SK-N-SH (cell line): ENCODE measurements at regions of chr7 and their contacts with region 1.

Region 1: GRCh38 chr7:145036604-145037405 is 201.0 kb upstream of the TPK1 start:
- DNase-seq: peak; percentile 44
- H3K4me3 ChIP-seq: peak overlapping the region in 1 of 2 experiments; percentile 9; a peak in 1 of 4 replicates
- H3K27ac ChIP-seq: no peak overlapping the region
- H3K4me1 ChIP-seq: no peaks in the 10 kb centered on the region
- H3K27me3 ChIP-seq: no peaks in the 10 kb centered on the region
- CTCF ChIP-seq: peak; percentile 95
- EP300 ChIP-seq: no peak
- RAD21 ChIP-seq: peak; percentile 77

Region 2: DNA sequence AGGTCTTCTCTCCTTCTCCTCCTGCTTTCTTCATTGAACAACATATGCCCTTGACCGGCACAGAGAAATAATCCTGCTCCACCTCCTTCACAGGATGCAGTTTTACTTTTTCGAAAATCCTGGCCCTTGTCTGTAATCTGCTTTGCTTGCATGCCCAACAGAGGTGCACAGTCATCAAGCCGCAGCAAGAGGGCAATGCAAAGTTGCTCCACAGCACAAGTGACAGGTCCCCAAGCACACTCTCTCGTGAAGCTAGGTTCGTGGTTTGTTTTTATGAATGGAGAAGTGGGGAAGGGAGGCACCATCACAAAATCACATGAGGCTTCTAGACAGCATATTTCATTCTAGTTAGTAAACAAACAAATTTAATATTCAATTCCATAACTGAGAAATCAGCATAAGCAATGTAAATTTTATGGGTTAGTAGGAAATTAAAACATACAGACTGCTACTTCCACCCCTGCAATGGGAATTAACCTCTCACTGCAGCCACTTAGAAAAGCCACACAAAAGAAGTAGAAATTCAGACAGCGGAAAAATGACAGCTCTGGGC is 379.8 kb before region 1 on chr7:
- CTCF ChIA-PET with region 1: no interaction called
- POLR2A ChIA-PET with region 1: no interaction called
- DNase-seq: no peak
- H3K4me3 ChIP-seq: no peak overlapping the region
- H3K27ac ChIP-seq: no peak overlapping the region
- H3K4me1 ChIP-seq: no peaks in the 10 kb centered on the region
- H3K27me3 ChIP-seq: no peaks in the 10 kb centered on the region
- CTCF ChIP-seq: no peak
- EP300 ChIP-seq: no peak
- RAD21 ChIP-seq: no peak

Region 3: DNA sequence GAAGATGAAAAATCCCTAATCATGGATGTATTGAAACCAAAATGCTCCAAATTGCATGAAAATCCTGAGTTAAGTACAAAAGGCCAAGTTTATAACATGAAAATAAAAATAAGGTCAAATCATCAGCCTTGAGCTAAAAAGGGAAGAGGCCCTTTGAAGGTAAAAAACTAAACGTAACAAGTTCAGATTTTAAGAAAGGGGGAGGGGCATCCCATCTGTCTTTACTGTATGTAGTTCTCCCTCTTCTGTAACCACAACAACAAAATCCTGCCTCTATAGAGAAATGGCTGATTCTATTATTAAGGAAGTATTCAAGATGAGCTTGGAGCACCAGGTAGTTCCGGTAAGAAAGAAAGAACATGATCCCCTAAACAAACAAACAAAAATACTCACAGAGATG is 265.6 kb before region 1 on chr7:
- CTCF ChIA-PET with region 1: no interaction called
- POLR2A ChIA-PET with region 1: no interaction called
- DNase-seq: no peak
- H3K4me3 ChIP-seq: no peak overlapping the region
- H3K27ac ChIP-seq: no peak overlapping the region
- H3K4me1 ChIP-seq: no peaks in the 10 kb centered on the region
- H3K27me3 ChIP-seq: no peaks in the 10 kb centered on the region
- CTCF ChIP-seq: no peak
- EP300 ChIP-seq: no peak
- RAD21 ChIP-seq: no peak

Region 4: GRCh38 chr7:145020454-145020853 is 16.4 kb before region 1 on chr7:
- CTCF ChIA-PET with region 1: interaction called, 13 read pairs
- POLR2A ChIA-PET with region 1: no interaction called
- DNase-seq: no peak
- H3K4me3 ChIP-seq: no peak overlapping the region
- H3K27ac ChIP-seq: no peak overlapping the region
- H3K4me1 ChIP-seq: no peaks in the 10 kb centered on the region
- H3K27me3 ChIP-seq: no peaks in the 10 kb centered on the region
- CTCF ChIP-seq: no peak
- EP300 ChIP-seq: no peak
- RAD21 ChIP-seq: no peak